Esophagus muscularis mucosa (tissue), 4 donors: ENCODE measurements at regions of chr13 and their contacts with region 1.

Region 1: GRCh38 chr13:26698392-26699196 is 62.0 kb downstream of the GPR12 start:
- DNase-seq: peak; percentile 96
- H3K4me3 ChIP-seq: peak overlapping the region; percentile 20 to 41 (median 24)
- H3K27ac ChIP-seq: no peak overlapping the region
- H3K4me1 ChIP-seq: peaks cover 3 to 10% (median 6%) of the 10 kb centered on the region in 4 donors
- H3K27me3 ChIP-seq: no peaks in the 10 kb centered on the region
- CTCF ChIP-seq: peak; percentile 93 to 97 (median 97)
- EP300 ChIP-seq: no peak
- POLR2A ChIP-seq: no peak

Region 2: DNA sequence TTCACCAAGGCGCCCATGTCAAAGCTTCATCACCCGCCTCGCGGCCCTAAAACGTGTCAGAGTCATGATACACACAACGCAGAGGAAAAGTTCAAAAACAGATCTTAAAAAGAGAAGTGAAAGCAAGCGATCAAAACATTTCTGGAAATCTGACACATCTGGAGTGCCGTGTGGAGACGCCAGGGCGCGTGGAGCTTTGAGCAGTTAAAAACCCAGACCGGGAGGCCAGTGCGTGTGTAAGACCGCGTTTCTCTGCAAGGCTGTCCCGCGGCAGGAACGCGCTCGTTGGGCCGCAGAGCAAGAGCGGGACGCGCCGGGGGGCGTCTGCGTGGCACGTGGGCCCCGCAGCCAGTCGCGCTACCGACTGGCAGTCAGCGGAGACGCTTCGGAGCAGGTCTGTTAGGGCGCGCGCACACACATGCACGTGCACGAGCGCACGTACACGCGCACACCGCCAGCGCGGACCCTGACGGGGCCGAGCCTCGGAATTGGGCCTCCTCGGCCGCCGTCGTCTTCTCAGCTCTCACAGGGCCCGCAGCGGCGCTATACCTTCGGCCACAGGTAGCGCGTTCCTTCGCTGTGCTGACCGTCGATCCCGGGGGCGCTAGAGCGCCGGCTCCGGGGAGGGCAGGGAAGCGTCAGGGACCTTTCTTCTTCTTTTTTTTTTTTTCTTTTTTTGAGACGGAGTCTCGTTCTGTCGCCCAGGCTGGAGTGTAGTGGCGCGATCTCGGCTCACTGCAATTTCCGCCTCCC is 512.3 kb before region 1 on chr13:
- intact Hi-C with region 1: loop called (anchors 1 kb)
- DNase-seq: peak; percentile 94
- H3K4me3 ChIP-seq: peak overlapping the region; percentile 68 to 82 (median 76)
- H3K27ac ChIP-seq: peak overlapping the region; percentile 78 to 89 (median 84)
- H3K4me1 ChIP-seq: peaks cover 7 to 26% (median 18%) of the 10 kb centered on the region in 4 donors
- H3K27me3 ChIP-seq: no peaks in the 10 kb centered on the region
- CTCF ChIP-seq: peak; percentile 17 to 35 (median 28)
- EP300 ChIP-seq: no peak
- POLR2A ChIP-seq: no peak

Region 3: DNA sequence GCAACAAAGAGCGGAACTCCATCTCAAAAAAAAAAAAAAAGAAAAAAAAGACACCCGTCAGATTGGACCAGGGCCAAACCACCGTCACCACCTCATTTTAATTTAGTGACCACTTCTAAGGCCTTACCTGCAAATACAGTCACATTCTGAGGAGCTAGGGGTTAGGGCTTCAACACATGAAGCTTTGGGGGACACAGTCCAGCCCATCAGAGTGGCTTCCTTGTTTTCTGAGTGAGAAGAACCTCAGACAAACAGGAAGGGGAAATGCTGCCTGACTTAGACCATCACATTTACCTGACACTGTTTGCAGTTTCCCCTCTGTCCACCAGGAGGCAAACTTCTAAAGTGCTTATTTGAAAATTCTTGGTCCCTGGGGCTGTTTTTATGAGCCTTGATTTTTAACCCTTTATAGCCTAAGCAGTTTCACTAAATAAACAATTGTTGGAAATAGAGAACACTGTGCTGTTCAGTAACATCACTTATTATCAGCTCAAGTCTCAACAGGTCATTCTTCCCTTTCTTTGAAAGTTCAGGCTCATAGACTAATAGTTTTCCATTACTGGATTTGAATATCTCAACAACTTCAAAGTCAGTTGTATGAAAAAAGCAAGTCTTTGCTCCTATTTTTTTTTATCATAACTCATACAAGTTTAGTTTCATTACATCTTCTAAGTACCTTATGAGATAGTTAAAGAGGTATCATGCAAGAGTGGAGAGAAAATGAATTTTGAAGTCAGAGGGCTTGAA is 216.0 kb before region 1 on chr13:
- intact Hi-C with region 1: loop called (anchors 5 kb)
- DNase-seq: no peak
- H3K4me3 ChIP-seq: no peak overlapping the region
- H3K27ac ChIP-seq: no peak overlapping the region
- H3K4me1 ChIP-seq: peaks cover 0 to 16% (median 11%) of the 10 kb centered on the region in 4 donors
- H3K27me3 ChIP-seq: no peaks in the 10 kb centered on the region
- CTCF ChIP-seq: peak; percentile 71 to 90 (median 72)
- EP300 ChIP-seq: no peak
- POLR2A ChIP-seq: no peak

Region 4: DNA sequence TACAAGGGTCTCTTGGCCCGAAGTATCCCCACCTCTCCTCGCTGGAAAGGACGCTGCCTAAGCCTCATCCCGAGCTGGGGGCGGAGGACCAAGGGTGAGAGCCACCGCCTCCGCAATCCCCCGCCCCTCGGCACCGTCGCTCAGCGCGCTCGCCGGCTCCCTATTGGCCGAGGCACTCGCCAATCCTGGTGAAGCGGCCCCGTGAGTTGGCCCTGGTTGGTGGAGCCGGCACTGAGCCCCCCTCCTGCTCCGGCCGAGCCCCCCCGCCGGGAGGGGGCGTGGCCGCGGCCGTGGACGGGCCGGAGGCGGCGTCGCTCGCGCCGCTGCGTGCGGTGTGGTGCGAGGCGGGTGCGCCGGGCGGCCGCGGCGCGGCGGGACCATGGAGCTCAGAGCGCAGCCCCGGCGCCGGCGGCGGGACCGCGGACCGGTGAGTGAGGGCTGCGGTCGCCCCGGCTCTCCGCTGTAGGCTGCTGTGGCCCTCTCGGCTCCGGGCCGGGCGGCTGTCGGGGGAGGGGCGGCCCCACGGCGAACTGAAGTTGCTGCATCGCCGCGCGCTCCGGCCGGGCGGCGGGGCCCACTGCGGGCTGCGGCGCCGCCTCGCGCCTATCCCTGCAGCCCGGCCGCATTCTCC is 141.1 kb before region 1 on chr13 and contains the start of gene WASF3:
- intact Hi-C with region 1: loop called (anchors 10 kb)
- DNase-seq: peak; percentile 97
- H3K4me3 ChIP-seq: peak within 1 kb of the TSS; percentile 78 to 88 (median 84)
- H3K27ac ChIP-seq: peak within 1 kb of the TSS; percentile 71 to 85 (median 80)
- H3K4me1 ChIP-seq: peaks cover 0 to 27% (median 19%) of the 10 kb centered on the region in 4 donors
- H3K27me3 ChIP-seq: no peaks in the 10 kb centered on the region
- CTCF ChIP-seq: no peak
- EP300 ChIP-seq: no peak
- POLR2A ChIP-seq: no peak
- total RNA-seq, gene WASF3: 16.6 to 19.9 (median 18.4) TPM

Region 5: DNA sequence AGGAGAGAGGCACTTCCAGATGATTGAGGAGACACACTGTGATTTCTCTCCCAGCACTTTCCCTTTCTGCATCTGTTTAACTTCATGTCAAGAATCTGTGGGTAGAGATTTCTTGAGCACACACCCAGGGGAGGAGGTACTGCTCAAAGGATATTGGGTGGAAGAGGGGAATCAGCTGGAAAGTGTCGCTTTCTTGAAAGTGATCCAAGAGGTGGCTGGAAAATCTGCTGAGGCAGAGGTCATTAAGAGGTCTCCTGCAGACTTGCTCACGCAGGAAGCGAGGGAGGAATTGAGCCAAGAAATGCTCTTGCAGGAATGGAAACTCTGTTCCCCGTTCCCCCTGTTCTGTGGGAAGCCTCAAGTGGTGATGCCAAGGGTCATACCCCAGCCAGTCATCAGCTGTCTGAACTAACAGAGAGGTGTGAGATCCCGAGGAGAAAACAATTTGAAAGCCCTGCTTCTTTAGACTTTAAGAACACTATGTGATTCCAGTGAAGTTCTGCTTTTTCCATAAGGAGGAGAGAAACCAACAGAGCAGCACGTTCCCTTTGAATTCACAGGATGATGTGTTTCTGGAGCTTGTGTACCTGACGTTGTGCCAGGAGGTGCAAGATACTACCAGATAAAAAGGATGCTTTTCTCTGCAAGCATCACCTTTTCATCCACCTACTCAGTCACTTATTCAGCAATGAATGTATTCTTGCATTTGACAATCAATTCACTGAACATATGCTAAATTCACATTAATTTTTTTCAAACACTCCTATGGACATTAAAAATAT is 225.4 kb after region 1 on chr13:
- intact Hi-C with region 1: no loop called
- DNase-seq: no peak
- H3K4me3 ChIP-seq: no peak overlapping the region
- H3K27ac ChIP-seq: no peak overlapping the region
- H3K4me1 ChIP-seq: peaks cover 3 to 18% (median 17%) of the 10 kb centered on the region in 4 donors
- H3K27me3 ChIP-seq: peaks cover 0 to 4% (median 0%) of the 10 kb centered on the region in 4 donors
- CTCF ChIP-seq: no peak
- EP300 ChIP-seq: no peak
- POLR2A ChIP-seq: no peak

Region 6: DNA sequence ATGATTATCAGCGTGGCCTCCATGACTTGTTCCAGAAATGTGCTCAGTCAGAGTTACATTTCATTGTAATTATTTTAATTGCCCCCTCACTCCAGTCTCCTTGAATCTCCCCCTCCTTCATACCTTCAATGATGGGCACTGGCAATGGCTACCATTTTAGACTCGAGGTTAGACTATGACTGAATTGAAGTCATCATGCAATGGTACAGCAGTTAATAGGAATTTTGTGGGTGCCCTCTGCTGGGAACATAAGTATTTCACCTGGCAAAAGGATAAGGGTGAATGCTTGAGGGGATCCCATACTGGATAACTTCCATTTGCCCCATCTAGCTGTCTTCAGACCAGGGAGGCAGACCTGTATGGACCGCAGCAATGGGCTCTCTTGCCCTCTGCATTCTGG is 505.3 kb after region 1 on chr13:
- intact Hi-C with region 1: no loop called
- DNase-seq: no peak
- H3K4me3 ChIP-seq: no peak overlapping the region
- H3K27ac ChIP-seq: no peak overlapping the region
- H3K4me1 ChIP-seq: no peaks in the 10 kb centered on the region
- H3K27me3 ChIP-seq: no peaks in the 10 kb centered on the region
- CTCF ChIP-seq: peak in 2 of 3 experiments; percentile 31 to 36
- EP300 ChIP-seq: no peak
- POLR2A ChIP-seq: no peak